Heart right ventricle (tissue), 16 donors: ENCODE measurements at regions of chr10 and their contacts with region 1.

Region 1: DNA sequence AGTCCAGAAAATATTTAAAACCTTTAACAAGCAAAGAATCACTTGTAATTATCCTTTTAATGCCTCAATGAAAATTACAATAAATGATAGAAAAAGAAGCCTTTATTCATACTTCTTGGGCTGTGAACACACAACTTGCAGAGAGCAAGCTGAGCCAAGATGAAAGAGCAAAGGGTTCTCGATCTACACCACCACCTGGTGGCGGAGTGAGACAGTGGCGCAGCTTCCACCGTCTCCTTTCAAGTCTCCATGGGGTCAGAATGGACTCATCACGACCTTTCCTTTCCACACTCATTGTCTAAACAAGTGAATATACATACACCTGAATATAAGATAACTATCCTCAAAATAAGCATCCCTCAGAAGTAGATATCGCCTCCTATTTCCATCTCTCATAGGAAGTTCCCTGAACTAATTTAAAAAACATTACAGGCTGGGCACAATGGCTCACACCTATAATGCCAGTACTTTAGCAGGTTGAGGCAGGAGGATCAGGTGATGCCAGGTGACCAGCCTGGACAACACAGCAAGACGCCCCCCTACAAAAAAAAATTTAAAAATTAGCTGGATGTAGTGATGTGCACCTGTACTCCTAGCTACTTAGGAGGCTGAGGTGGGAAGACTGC is 40.7 kb downstream of the ATE1 start:
- DNase-seq: peak; percentile 40 to 51
- ATAC-seq: peak; percentile 55 to 83 (median 72)
- H3K4me3 ChIP-seq: no peak overlapping the region
- H3K27ac ChIP-seq: no peak overlapping the region
- H3K4me1 ChIP-seq: peaks cover 0 to 5% (median 0%) of the 10 kb centered on the region in 9 donors
- H3K27me3 ChIP-seq: no peaks in the 10 kb centered on the region
- CTCF ChIP-seq: peak; percentile 45 to 85 (median 77)

Region 2: DNA sequence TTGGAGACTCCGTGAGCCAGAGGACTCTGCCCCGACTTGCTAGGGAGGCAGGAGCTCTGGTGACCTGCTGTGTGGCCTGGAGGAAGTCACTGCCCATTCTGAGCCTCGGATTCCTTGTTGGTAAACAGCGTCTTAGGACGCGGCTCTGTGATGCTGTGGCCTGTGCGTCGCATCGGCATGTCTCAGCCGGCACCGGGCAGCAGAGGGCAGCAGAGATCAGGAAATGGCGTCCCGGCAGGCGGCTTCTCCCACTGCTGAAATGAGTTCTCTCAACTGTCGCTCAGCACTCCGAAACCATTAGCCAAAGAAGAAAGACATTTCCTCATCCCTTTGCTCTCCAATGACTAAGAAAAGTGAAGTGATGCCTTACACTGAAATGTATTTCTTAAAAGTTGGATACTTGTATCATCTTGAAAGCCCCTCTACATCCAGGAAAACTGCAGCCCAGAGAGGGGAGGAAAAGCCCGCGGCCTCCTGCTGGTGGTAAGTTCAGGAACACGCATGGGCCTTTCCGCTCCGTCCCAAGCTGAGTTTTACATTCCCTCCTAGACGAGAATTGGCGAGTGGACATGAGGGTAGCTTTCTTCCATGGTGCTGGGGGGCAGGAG is 944.2 kb before region 1 on chr10:
- intact Hi-C with region 1: loop called in 7 of 10 experiments (anchors 5 to 10 kb)
- DNase-seq: peak; percentile 73 to 81
- ATAC-seq: peak; percentile 85 to 94 (median 90)
- H3K4me3 ChIP-seq: peak overlapping the region in 1 of 10 donors; percentile 12
- H3K27ac ChIP-seq: no peak overlapping the region
- H3K4me1 ChIP-seq: peaks cover 0 to 8% (median 0%) of the 10 kb centered on the region in 9 donors
- H3K27me3 ChIP-seq: peaks cover 0 to 27% (median 16%) of the 10 kb centered on the region in 7 donors
- CTCF ChIP-seq: peak; percentile 60 to 91 (median 89)

Region 3: GRCh38 chr10:120948889-120949608 is 938.1 kb before region 1 on chr10:
- intact Hi-C with region 1: loop called in 8 of 10 experiments (anchors 1 to 10 kb)
- DNase-seq: peak; percentile 49 to 75
- ATAC-seq: peak; percentile 92 to 99 (median 96)
- H3K4me3 ChIP-seq: peak overlapping the region; percentile 16 to 57 (median 50)
- H3K27ac ChIP-seq: no peak overlapping the region
- H3K4me1 ChIP-seq: peaks cover 6 to 18% (median 13%) of the 10 kb centered on the region in 9 donors
- H3K27me3 ChIP-seq: peaks cover 0 to 51% (median 37%) of the 10 kb centered on the region in 7 donors
- CTCF ChIP-seq: peak; percentile 76 to 95 (median 91)

Region 4: DNA sequence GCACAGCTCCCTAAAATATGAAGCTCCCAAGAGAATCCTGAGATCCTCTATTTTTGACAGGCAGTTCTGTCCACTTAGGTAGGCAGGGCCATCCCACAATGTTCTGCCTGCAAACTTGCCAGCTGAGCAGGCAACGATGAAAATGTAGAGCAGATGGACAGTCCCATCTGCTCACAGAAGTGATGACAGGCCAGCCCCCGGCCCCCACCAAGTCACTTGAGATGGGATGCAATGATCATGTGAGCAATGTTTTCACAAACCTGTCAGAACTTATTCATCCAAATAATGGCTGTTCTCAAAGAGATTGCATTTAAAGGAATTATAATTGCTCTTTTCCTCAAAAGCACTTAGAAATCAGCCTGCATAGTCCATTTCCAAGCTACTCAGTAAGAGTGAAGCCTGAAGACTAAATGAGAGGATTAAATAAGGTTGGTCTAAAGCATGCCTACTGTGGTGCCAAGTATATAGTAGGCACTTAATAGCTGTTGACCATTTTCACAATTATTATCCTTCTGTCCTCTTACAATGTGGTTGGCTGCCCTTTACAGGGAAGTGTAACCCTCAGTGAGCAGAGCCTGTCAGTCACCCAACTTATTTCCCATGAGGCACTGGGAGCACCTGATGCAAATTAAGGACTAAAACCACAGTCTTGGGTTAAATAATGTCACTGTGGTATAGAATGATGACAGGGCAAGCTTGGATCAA is 590.1 kb before region 1 on chr10:
- intact Hi-C with region 1: no loop called
- DNase-seq: no peak
- ATAC-seq: no peak
- H3K4me3 ChIP-seq: no peak overlapping the region
- H3K27ac ChIP-seq: no peak overlapping the region
- H3K4me1 ChIP-seq: no peaks in the 10 kb centered on the region
- H3K27me3 ChIP-seq: peaks cover 0 to 30% (median 4%) of the 10 kb centered on the region in 7 donors
- CTCF ChIP-seq: no peak

Region 5: GRCh38 chr10:121734589-121735045 is 152.5 kb before region 1 on chr10:
- intact Hi-C with region 1: loop called in 1 of 10 experiments (anchors 10 kb)
- DNase-seq: no peak
- ATAC-seq: peak in 3 of 8 donors; percentile 11 to 25 (median 19)
- H3K4me3 ChIP-seq: peak overlapping the region in 2 of 10 donors; percentile 17 to 26
- H3K27ac ChIP-seq: no peak overlapping the region
- H3K4me1 ChIP-seq: peaks cover 0 to 19% (median 8%) of the 10 kb centered on the region in 9 donors
- H3K27me3 ChIP-seq: peaks cover 0 to 47% (median 19%) of the 10 kb centered on the region in 7 donors
- CTCF ChIP-seq: peak; percentile 54 to 81 (median 71)

Region 6: GRCh38 chr10:121823993-121824463 is 63.1 kb before region 1 on chr10:
- intact Hi-C with region 1: loop called in 2 of 10 experiments (anchors 2 to 10 kb)
- DNase-seq: no peak
- ATAC-seq: peak in 2 of 8 donors; percentile 41 to 52
- H3K4me3 ChIP-seq: no peak overlapping the region
- H3K27ac ChIP-seq: no peak overlapping the region
- H3K4me1 ChIP-seq: no peaks in the 10 kb centered on the region
- H3K27me3 ChIP-seq: no peaks in the 10 kb centered on the region
- CTCF ChIP-seq: peak; percentile 41 to 70 (median 63)

Region 7: DNA sequence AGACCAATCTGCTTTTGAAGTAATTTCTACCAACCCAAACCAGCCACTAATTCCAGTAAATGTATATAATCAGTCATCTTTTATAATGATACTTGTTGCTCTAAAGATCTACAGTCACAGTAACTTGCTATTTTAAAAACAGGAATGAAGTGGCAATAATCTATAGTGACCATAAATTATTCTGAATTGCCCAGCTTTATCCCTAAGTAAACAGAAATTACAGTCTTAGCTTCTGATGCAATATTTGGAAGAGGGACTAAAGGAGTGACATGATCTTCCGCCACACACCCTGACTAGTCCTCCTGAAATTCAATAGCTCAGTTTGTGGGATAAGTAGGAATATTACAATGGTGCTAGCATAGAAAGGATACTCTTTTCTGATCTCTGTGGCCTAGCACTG is 55.3 kb before region 1 on chr10:
- intact Hi-C with region 1: loop called in 2 of 10 experiments (anchors 5 to 10 kb)
- DNase-seq: no peak
- ATAC-seq: no peak
- H3K4me3 ChIP-seq: no peak overlapping the region
- H3K27ac ChIP-seq: no peak overlapping the region
- H3K4me1 ChIP-seq: peaks cover 0 to 14% (median 0%) of the 10 kb centered on the region in 9 donors
- H3K27me3 ChIP-seq: no peaks in the 10 kb centered on the region
- CTCF ChIP-seq: no peak

Region 8: GRCh38 chr10:122029499-122030199 is 142.5 kb after region 1 on chr10:
- intact Hi-C with region 1: no loop called
- DNase-seq: peak; percentile 30 to 55
- ATAC-seq: peak; percentile 45 to 85 (median 73)
- H3K4me3 ChIP-seq: peak overlapping the region in 2 of 10 donors; percentile 3 to 5
- H3K27ac ChIP-seq: peak overlapping the region; percentile 17 to 85 (median 75)
- H3K4me1 ChIP-seq: peaks cover 0 to 52% (median 28%) of the 10 kb centered on the region in 9 donors
- H3K27me3 ChIP-seq: no peaks in the 10 kb centered on the region
- CTCF ChIP-seq: peak in 1 of 9 donors; percentile 16